ENCODE measurements at regions of chr12 and their contacts with region 1.

Region 1: DNA sequence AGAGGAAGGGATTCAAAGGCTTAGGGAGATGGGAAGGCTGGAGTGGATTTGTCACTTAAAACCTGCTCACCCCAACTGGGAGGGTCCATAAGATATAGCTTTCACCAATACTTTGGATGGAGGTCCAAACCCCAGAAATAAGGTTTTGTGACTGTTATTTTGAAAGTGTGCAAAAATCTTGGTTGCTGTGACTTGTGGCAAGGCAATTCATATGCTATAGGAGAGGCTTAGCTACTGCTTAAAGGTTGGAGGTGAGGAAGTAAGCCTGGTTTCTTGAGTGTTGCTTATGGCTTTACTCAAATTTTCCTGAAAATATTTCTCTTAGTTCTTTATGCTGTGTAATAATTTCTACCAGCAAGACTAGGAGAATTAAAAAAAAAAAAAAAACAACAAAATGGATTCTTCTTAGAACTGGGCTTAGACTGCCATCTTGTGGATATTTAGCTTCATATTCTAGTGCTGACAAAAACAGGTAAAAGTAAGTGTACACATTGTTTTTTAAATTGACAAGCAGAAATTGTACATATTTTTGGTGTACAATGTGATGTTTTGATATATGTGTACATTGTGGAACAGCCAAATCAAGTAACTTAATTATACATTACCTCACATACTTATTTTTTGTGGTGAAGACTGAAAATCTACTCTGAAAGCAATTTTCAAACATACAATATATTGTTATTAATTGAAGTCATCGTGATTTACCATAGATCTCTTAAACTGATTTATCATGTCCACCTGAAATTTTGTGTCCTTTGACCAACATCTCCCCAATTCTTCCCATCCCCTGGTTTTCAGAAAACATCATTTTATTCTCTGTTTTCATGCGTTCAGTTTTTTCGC is 23.0 kb downstream of the PDE6H start:
- DNase-seq: no peak
- ATAC-seq: peak; percentile 74

Region 2: GRCh38 chr12:14272956-14273907 is 722.6 kb before region 1 on chr12:
- intact Hi-C with region 1: no loop called
- DNase-seq: no peak
- ATAC-seq: peak; percentile 79

Region 3: DNA sequence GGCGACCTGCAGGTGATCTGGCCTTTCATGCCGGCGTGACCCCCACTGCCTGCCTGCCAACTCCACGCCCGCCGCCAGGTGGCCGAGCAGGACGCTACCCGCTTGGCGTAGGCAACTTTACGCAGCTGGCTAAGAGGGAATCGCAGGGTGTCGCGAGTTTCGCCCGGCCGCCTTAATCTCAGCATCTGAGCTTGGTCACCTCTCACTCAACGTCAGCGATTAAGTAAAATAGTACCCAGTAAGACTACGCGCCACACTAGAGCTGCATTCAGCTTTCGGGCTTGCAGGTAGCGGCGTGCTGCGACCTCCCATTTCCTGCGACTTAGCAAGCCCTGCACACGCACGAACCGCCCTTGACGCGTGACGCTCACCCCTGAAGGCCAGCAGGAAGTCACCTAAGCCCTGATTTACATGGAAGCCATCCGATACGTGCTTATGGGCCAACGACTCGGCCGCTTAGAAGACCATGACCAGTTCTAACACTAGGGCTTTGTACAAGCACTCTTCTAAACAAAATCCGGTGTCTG is 225.8 kb before region 1 on chr12:
- intact Hi-C with region 1: loop called (anchors 10 kb)
- DNase-seq: peak; percentile 87
- ATAC-seq: peak; percentile 66

Region 4: GRCh38 chr12:14845350-14845750 is 150.5 kb before region 1 on chr12:
- intact Hi-C with region 1: loop called (anchors 5 kb)
- DNase-seq: no peak
- ATAC-seq: peak; percentile 74

Measured in sciatic nerve (tissue), 2 donors.